IMR-90 (cell line): ENCODE measurements at regions of chr6 and their contacts with region 1.

Region 1: DNA sequence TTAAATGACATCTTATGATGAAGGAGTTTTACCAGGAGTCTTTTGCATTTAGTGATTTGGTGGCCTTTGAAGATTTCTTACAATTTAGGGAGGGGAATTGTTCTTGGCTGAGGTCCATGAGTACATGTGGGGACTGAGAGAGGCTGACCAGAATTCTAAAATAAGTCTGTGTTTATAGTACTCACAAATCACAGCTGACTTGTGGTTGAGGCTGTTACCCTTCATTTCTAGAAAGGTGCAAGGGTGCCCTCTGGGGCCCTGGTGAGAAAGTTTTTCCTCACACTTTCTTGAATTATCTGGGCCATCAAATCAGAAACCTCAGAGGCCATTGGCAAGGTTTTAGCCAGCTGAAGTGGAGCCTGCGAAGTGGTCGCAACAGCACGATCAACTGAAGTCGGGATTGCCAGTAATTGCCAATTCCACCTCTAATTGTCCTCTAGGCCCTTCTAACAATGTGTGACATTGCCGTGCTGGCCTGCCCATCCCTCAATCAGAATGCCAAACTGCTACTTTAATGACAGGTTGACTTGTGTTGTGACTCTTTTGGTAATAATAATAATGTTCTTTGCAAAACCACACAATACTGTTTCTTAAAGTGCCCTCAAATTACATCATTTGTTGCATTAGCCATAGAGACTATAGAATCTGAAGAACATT is 221.6 kb downstream of the OGFRL1 start:
- DNase-seq: peak; percentile 84
- ATAC-seq: peak; percentile 86
- H3K4me3 ChIP-seq: no peak overlapping the region
- H3K27ac ChIP-seq: no peak overlapping the region
- H3K4me1 ChIP-seq: peaks cover 8% of the 10 kb centered on the region
- H3K27me3 ChIP-seq: no peaks in the 10 kb centered on the region
- CTCF ChIP-seq: peak; percentile 94
- POLR2A ChIP-seq: no peak
- RAD21 ChIP-seq: peak; percentile 96

Region 2: GRCh38 chr6:71383901-71384489 is 126.2 kb before region 1 on chr6:
- CTCF ChIA-PET with region 1: interaction called, 7 read pairs
- POLR2A ChIA-PET with region 1: interaction called, 7 read pairs
- dilution Hi-C with region 1: no loop called
- in situ Hi-C with region 1: loop called (anchors 5 kb)
- intact Hi-C with region 1: loop called (anchors 1 kb)
- DNase-seq: peak; percentile 72
- ATAC-seq: peak; percentile 64
- H3K4me3 ChIP-seq: no peak overlapping the region
- H3K27ac ChIP-seq: no peak overlapping the region
- H3K4me1 ChIP-seq: peaks cover 9% of the 10 kb centered on the region
- H3K27me3 ChIP-seq: no peaks in the 10 kb centered on the region
- CTCF ChIP-seq: peak; percentile 82
- POLR2A ChIP-seq: peak; percentile 50; the same call in 1 of the 2 replicates
- RAD21 ChIP-seq: peak; percentile 96

Region 3: DNA sequence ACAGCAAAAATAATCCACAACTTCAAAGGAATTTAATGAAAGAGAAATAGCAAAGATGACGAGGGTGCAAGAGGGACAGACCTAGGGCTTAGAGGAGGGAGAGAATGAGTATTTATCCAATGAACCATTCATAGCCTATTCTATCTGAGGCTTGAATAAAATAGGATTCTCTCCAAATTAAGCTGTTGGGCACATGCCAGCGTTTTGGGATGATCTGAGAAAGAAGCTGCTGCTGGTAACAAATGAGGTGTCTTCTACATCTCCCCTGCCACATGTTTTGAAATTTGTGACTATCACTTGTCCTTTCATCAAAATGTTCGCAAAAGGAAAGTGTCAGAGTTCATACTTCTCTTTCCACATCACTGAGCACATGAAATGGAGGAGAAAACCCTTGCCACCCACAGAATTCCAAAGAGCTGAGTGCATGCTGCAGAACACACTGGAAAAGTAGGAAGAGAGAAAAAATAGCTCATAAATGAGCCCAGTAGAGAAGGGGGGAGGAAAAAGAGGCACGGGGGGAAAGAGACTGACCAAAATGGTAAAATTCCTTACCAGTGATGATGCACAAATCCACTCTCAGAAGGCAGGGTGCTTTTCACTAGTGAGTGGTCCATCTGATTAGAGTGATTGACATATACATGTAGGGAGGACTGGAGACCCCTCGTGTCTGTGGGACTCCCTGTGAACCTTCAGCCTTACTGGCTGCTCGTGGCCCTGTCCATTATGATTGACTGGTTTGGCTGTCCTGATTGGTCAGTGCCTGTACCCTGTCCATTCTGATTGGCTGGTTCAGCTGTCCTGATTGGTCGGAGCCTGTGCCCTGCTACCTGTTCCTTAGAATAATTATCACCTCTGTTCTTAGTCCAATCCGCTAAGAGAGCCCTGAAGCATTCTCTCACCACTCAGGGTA is 41.1 kb before region 1 on chr6:
- CTCF ChIA-PET with region 1: no interaction called
- POLR2A ChIA-PET with region 1: no interaction called
- dilution Hi-C with region 1: no loop called
- in situ Hi-C with region 1: no loop called
- intact Hi-C with region 1: loop called (anchors 5 kb)
- DNase-seq: peak; percentile 95
- ATAC-seq: peak; percentile 91
- H3K4me3 ChIP-seq: peak overlapping the region; percentile 56; the same call in 1 of the 2 replicates
- H3K27ac ChIP-seq: peak overlapping the region; percentile 93
- H3K4me1 ChIP-seq: peaks cover 7% of the 10 kb centered on the region
- H3K27me3 ChIP-seq: no peaks in the 10 kb centered on the region
- CTCF ChIP-seq: no peak
- POLR2A ChIP-seq: no peak
- RAD21 ChIP-seq: no peak

Region 4: DNA sequence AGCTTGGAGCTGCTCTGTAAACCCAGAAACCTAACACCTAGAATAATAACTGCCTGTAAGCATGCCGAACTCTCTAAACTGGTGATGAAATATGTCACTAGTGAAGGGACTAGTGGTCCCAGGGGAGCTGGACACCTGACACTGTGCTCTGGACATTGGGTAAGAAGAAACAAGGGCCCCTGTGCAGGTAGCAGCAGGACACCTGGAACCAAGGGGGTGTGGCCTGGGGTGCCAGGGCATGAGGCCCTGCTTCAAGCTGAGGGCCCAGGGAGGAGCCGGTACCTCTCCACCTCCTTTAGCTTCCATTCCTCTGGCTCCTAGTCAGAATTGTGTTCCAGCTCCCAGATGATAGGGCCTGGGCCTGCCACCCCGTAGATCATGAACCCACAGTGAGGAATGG is 41.6 kb after region 1 on chr6:
- CTCF ChIA-PET with region 1: no interaction called
- POLR2A ChIA-PET with region 1: no interaction called
- dilution Hi-C with region 1: no loop called
- in situ Hi-C with region 1: no loop called
- intact Hi-C with region 1: no loop called
- DNase-seq: no peak
- ATAC-seq: no peak
- H3K4me3 ChIP-seq: no peak overlapping the region
- H3K27ac ChIP-seq: no peak overlapping the region
- H3K4me1 ChIP-seq: 0 out of 2 replicates have a peak, but pooled peaks cover 2% of the 10 kb centered on the region
- H3K27me3 ChIP-seq: no peaks in the 10 kb centered on the region
- CTCF ChIP-seq: no peak
- POLR2A ChIP-seq: no peak
- RAD21 ChIP-seq: no peak